K562 (cell line): ENCODE measurements at regions of chr6 and their contacts with region 1.

Region 1: GRCh38 chr6:31158140-31158862 is at the start of gene TCF19:
- DNase-seq: peak; percentile 100
- ATAC-seq: peak; percentile 95
- H3K4me3 ChIP-seq: peak within 1 kb of the TSS; percentile 75
- H3K27ac ChIP-seq: peak within 1 kb of the TSS; percentile 79
- H3K4me1 ChIP-seq: peaks cover 17 to 30% of the 10 kb centered on the region in 2 experiments; a peak in 4 of 5 replicates
- H3K27me3 ChIP-seq: no peaks in the 10 kb centered on the region
- CTCF ChIP-seq: no peak; a peak in 1 of 6 replicates
- EP300 ChIP-seq: no peak
- POLR2A ChIP-seq: no peak; the same call in 1 of the 2 replicates
- RAD21 ChIP-seq: no peak
- polyA plus RNA-seq, gene TCF19: 4.2 to 4.6 TPM

Region 2: DNA sequence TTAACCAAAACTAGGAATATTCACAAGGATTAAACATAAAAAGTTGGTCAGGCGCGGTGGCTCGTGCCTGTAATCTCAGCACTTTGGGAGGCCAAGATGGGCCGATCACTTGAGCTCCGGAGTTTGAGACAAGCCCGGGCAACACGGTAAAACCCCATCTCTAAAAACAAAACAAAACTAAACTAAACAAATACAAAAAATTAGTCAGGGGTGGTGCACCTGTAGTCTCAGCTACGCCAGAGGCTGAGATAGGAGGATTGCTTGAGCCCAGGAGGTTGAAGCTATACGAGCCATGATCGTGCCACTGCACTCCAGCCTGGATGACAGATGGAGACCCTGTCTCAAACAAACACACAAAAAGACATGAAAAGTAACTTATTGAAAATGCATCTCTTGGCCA is 22.6 kb before region 1 on chr6:
- CTCF ChIA-PET with region 1: no interaction called
- POLR2A ChIA-PET with region 1: interaction called, 3 read pairs
- in situ Hi-C with region 1: no loop called
- intact Hi-C with region 1: loop called (anchors 2 kb)
- DNase-seq: no peak
- ATAC-seq: no peak
- H3K4me3 ChIP-seq: no peak overlapping the region
- H3K27ac ChIP-seq: no peak overlapping the region
- H3K4me1 ChIP-seq: peaks cover 3 to 12% of the 10 kb centered on the region in 2 experiments; a peak in 4 of 5 replicates
- H3K27me3 ChIP-seq: peaks cover 12 to 33% of the 10 kb centered on the region in 2 experiments
- CTCF ChIP-seq: no peak
- EP300 ChIP-seq: no peak
- POLR2A ChIP-seq: no peak
- RAD21 ChIP-seq: no peak